ENCODE measurements at regions of chr20 and their contacts with region 1.

Region 1: GRCh38 chr20:37345339-37346230 is at the start of gene SRC:
- DNase-seq: peak; percentile 73
- ATAC-seq: peak; percentile 56
- H3K4me3 ChIP-seq: peak within 1 kb of the TSS; percentile 70
- H3K27ac ChIP-seq: peak within 1 kb of the TSS; percentile 27; the same call in 1 of the 2 replicates
- H3K4me1 ChIP-seq: peaks cover 35% of the 10 kb centered on the region
- H3K27me3 ChIP-seq: no peaks in the 10 kb centered on the region
- CTCF ChIP-seq: no peak
- total RNA-seq, gene SRC: 55.6 and 82.1 TPM in 2 replicates

Region 2: GRCh38 chr20:37295001-37295400 is 50.6 kb before region 1 on chr20:
- CTCF ChIA-PET with region 1: interaction called, 4 read pairs
- POLR2A ChIA-PET with region 1: no interaction called
- intact Hi-C with region 1: loop called (anchors 5 kb)
- DNase-seq: peak; percentile 99
- ATAC-seq: peak; percentile 98
- H3K4me3 ChIP-seq: peak overlapping the region; percentile 27
- H3K27ac ChIP-seq: peak overlapping the region; percentile 84
- H3K4me1 ChIP-seq: peaks cover 55% of the 10 kb centered on the region
- H3K27me3 ChIP-seq: no peaks in the 10 kb centered on the region
- CTCF ChIP-seq: no peak